Activated CD4-positive, alpha-beta T cell treated with anti-CD3 and anti-CD28 coated beads for 36 hours (primary cell): ENCODE measurements at regions of chr1 and their contacts with region 1.

Region 1: GRCh38 chr1:33127001-33127791 is 46.2 kb downstream of the AZIN2 start:
- DNase-seq: peak; percentile 99
- ATAC-seq: peak; percentile 95
- H3K4me3 Mint-ChIP-seq: peak overlapping the region; percentile 97
- H3K27ac Mint-ChIP-seq: peak overlapping the region; percentile 98
- H3K4me1 Mint-ChIP-seq: peaks cover 40% of the 10 kb centered on the region
- H3K27me3 Mint-ChIP-seq: no peaks in the 10 kb centered on the region

Region 2: GRCh38 chr1:33080885-33081553 is 46.2 kb before region 1 on chr1 and contains the start of gene AZIN2:
- CTCF ChIA-PET with region 1: interaction called, 5 read pairs
- POLR2A ChIA-PET with region 1: interaction called, 5 read pairs
- intact Hi-C with region 1: loop called in 1 of 2 experiments (anchors 1 kb)
- DNase-seq: peak; percentile 98
- ATAC-seq: peak; percentile 100
- H3K4me3 Mint-ChIP-seq: peak within 1 kb of the TSS; percentile 61
- H3K27ac Mint-ChIP-seq: peak within 1 kb of the TSS; percentile 43
- H3K4me1 Mint-ChIP-seq: peaks cover 17% of the 10 kb centered on the region
- H3K27me3 Mint-ChIP-seq: peaks cover 3% of the 10 kb centered on the region
- total RNA-seq, gene AZIN2: 0.98 to 2.1 TPM

Region 3: GRCh38 chr1:33181921-33182341 is 54.7 kb after region 1 on chr1 and contains the start of gene TRIM62:
- CTCF ChIA-PET with region 1: interaction called, 10 read pairs
- POLR2A ChIA-PET with region 1: interaction called, 14 read pairs
- intact Hi-C with region 1: loop called (anchors 1 to 2 kb)
- DNase-seq: peak; percentile 84
- ATAC-seq: peak; percentile 35
- H3K4me3 Mint-ChIP-seq: peak within 1 kb of the TSS; percentile 79
- H3K27ac Mint-ChIP-seq: peak within 1 kb of the TSS; percentile 74
- H3K4me1 Mint-ChIP-seq: peaks cover 25% of the 10 kb centered on the region
- H3K27me3 Mint-ChIP-seq: peaks cover 5% of the 10 kb centered on the region
- total RNA-seq, gene TRIM62: 3.6 to 3.7 TPM

Region 4: DNA sequence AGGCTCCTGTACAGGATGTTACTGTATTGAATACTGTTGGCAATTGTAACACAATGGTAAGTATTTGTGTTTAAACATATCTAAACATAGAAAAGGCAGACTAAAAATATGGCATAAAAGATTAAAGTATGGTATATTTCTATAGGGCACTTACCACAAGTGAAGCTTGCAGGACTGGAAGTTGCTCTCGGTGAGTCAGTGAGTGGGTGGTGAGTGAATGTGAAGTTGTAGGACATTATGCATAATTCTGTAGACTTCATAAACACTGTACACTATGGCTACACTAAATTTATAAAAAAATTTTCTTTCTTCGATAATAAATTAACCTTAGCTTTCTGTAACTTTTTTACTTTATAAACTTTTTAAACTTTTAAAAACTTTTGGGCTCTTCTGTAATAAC is 68.4 kb after region 1 on chr1:
- CTCF ChIA-PET with region 1: no interaction called
- POLR2A ChIA-PET with region 1: no interaction called
- intact Hi-C with region 1: no loop called
- DNase-seq: peak; percentile 33
- ATAC-seq: no peak
- H3K4me3 Mint-ChIP-seq: no peak overlapping the region
- H3K27ac Mint-ChIP-seq: no peak overlapping the region
- H3K4me1 Mint-ChIP-seq: peaks cover 4% of the 10 kb centered on the region
- H3K27me3 Mint-ChIP-seq: peaks cover 9% of the 10 kb centered on the region

Region 5: DNA sequence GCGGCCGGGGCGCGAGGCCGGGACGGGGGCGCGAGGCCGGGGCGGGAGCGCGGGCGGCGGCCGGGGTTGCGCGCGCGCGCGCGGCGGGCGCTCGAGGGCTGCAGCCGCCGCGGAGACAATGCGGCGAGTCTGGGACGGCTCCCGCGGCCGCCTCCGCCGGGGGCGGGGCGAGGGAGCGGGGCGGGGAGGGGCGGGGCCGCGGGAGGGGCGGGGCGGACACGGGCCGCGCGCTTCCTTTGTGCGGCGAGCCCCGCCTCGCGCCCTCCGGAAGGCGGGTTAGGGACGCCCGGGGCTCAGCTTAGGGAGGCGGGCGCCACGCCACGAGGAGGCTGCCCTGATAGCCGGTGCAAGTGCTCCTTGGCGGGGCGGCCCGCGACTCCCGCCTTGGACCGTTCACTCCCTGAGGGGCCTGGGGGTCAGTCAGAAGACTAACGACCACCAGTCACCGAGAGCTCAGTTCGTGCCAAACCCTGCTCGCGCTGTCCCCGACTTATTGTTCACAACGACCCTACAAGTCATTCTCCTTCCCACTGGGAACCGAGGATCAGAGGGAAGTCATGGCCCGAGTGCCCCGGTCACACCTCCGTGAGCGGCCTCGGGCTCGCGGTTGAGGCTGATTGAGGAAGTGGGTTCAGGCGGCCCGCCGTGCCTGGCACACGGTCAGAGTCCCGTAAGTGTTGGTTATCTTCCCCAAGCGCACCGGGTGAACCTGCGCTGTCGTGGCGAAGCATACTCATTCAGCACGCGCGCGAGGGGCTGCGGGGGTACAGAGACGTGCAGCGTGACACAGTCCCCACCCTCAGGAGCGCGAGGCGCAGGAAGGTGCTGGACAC is 222.8 kb after region 1 on chr1:
- CTCF ChIA-PET with region 1: no interaction called
- POLR2A ChIA-PET with region 1: no interaction called
- intact Hi-C with region 1: loop called (anchors 1 to 10 kb)
- DNase-seq: peak; percentile 87
- ATAC-seq: peak; percentile 87
- H3K4me3 Mint-ChIP-seq: peak overlapping the region; percentile 89
- H3K27ac Mint-ChIP-seq: peak overlapping the region; percentile 93
- H3K4me1 Mint-ChIP-seq: peaks cover 43% of the 10 kb centered on the region
- H3K27me3 Mint-ChIP-seq: no peaks in the 10 kb centered on the region

Region 6: GRCh38 chr1:33575324-33575879 is 448.2 kb after region 1 on chr1:
- CTCF ChIA-PET with region 1: no interaction called
- POLR2A ChIA-PET with region 1: no interaction called
- intact Hi-C with region 1: no loop called
- DNase-seq: no peak
- ATAC-seq: no peak
- H3K4me3 Mint-ChIP-seq: no peak overlapping the region
- H3K27ac Mint-ChIP-seq: no peak overlapping the region
- H3K4me1 Mint-ChIP-seq: no peaks in the 10 kb centered on the region
- H3K27me3 Mint-ChIP-seq: peaks cover 32% of the 10 kb centered on the region